Cardiac septum (tissue), 1 donor: ENCODE measurements at regions of chr10 and their contacts with region 1.

Region 1: DNA sequence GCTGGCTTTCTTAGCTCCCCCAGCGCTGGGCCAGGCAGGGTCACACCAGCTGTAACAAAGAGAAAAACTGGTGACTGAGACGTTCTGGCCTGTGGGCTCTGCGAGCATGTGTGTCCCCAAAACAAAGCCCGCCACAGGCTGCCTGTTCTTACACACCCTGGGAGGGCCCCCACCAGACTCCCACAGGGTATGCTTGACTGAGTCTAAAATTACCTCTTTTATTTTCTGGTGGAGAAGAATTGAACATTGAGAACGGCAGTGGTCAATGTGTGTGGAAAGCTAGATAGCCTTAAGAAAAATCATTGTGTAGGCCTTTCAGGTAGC is 808 bp downstream of the C10orf71 start:
- DNase-seq: no peak

Region 2: DNA sequence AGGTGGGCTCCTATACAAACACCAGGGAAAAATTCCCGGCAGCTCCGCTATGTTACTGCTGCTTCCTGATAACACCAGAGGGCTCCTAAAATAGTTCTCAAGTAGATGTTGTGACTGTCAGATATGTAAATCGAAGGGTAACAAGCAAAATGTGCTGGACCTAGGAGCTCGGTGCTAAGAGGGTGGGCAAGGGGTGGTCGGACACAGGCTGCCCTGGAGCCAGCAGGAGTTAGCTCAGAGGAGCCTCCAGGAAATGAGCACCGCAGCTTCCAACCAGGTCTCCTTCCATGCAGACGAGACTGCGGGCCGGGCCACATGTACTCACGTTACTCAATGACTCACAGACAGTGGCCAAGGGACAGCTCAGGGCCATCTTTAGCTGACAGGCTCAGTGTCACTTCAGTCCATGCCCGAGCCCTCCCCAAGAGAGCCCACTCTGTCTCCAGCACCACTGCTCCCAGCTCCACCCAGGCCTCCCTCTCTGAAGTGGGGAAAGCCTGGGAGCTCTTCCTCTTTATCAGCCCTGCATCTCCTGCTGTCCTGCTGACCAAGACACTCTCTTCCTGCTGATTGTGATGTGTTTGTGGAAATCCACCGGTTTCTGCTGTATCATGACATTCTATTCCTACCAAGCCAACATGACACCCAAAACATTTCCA is 74.4 kb before region 1 on chr10:
- intact Hi-C with region 1: loop called (anchors 5 kb)
- DNase-seq: no peak

Region 3: GRCh38 chr10:49272251-49273081 is 27.3 kb before region 1 on chr10:
- intact Hi-C with region 1: loop called (anchors 1 kb)
- DNase-seq: peak; percentile 84

Region 4: DNA sequence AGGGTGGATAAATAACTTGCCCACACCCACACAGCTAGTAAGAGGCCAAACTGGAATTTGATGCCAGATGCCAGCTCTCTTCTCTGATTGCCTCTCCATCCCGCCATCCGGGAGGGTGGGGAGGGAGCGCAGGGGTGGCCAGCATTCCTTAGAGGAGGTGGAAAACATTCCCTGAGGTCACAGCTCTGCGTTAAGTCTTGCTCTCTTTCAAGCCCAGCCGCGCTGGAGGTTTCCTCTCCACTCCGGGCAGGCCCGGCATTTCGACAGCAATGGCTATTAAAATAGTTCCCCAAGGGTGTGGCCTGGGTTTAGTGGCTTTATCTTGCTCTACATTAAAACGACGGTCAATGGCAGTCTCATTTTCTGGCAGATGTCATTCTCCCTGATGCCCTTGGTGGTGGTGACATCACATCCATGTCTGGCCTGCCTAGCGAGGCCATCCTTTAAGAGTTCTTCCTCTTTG is 16.9 kb before region 1 on chr10:
- intact Hi-C with region 1: loop called (anchors 1 kb)
- DNase-seq: peak; percentile 83

Region 5: DNA sequence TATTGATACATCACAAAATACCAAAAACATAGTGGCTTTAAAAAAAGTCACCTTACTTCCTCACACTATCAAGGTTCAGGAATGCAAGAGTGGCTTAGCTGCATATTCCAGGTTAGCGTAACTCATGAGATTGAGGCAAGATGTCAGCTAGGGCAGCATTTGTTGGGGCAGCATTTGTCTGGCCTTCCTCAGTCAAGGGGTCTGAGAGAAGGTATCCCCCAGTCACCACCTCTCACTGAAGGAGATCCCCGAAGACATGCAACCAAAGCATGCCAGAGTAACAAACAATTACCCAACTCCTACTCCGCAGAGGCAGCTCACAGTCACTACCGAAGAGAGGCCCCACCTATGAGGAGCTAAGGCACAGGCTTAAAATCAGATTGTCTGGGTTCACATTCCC is 47.6 kb after region 1 on chr10:
- intact Hi-C with region 1: no loop called
- DNase-seq: peak; percentile 38

Region 6: DNA sequence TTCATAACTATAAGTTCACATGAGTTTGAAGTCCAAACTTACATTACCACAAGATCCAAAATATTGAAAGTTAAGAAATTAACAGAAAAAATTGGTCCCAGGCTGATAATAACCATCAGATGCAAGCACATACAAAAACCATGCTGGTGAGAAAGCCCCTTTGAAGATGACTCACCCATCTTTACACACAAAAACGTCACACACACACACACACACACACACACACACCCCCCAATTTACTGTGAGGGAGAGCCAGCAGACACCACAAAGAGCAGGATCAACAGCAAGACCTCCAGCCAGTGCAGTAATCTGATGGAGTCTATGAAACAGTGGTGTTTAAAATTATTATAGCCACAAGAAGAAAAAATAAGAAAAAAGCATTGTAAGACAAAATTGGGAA is 146.3 kb after region 1 on chr10:
- intact Hi-C with region 1: no loop called
- DNase-seq: no peak